MCF 10A (cell line): ENCODE measurements at regions of chr16 and their contacts with region 1.

Region 1: GRCh38 chr16:69396187-69397061 is 10.6 kb upstream of the TERF2 start:
- DNase-seq: peak; percentile 97
- H3K4me3 Mint-ChIP-seq: peak overlapping the region; percentile 35
- H3K27ac Mint-ChIP-seq: peak overlapping the region; percentile 78
- H3K4me1 Mint-ChIP-seq: peaks cover 17% of the 10 kb centered on the region
- H3K27me3 Mint-ChIP-seq: no peaks in the 10 kb centered on the region
- CTCF ChIP-seq: peak; percentile 59

Region 2: DNA sequence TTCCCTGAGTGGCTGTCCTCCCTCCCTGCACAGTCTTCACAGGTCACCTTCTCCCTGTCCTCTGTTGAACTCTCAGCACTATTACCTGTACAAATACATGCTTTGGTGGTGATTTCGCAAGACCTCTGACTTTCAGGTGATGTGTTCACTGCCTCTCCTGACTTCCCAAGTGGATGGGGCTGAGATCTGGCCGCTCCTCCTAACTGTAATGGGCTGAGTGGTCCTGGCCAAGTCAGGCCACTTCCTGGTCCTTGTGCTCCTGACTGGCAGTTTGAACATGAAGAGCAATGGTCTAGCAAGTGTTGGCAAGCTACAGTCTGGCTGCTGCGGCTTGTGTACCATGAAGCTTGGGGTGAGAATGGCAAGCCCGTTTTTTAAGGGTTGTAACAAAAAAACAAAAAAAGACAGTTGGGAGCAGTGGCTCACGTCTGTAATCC is 33.1 kb before region 1 on chr16:
- CTCF ChIA-PET with region 1: no interaction called
- POLR2A ChIA-PET with region 1: no interaction called
- intact Hi-C with region 1: no loop called
- DNase-seq: peak; percentile 19
- H3K4me3 Mint-ChIP-seq: no peak overlapping the region
- H3K27ac Mint-ChIP-seq: no peak overlapping the region
- H3K4me1 Mint-ChIP-seq: no peaks in the 10 kb centered on the region
- H3K27me3 Mint-ChIP-seq: no peaks in the 10 kb centered on the region
- CTCF ChIP-seq: no peak

Region 3: GRCh38 chr16:69410285-69410990 is 14.0 kb after region 1 on chr16:
- CTCF ChIA-PET with region 1: interaction called, 8 read pairs
- POLR2A ChIA-PET with region 1: interaction called, 16 read pairs
- intact Hi-C with region 1: no loop called
- DNase-seq: peak; percentile 85
- H3K4me3 Mint-ChIP-seq: peak overlapping the region; percentile 24
- H3K27ac Mint-ChIP-seq: peak overlapping the region; percentile 58
- H3K4me1 Mint-ChIP-seq: peaks cover 28% of the 10 kb centered on the region
- H3K27me3 Mint-ChIP-seq: no peaks in the 10 kb centered on the region
- CTCF ChIP-seq: no peak

Region 4: DNA sequence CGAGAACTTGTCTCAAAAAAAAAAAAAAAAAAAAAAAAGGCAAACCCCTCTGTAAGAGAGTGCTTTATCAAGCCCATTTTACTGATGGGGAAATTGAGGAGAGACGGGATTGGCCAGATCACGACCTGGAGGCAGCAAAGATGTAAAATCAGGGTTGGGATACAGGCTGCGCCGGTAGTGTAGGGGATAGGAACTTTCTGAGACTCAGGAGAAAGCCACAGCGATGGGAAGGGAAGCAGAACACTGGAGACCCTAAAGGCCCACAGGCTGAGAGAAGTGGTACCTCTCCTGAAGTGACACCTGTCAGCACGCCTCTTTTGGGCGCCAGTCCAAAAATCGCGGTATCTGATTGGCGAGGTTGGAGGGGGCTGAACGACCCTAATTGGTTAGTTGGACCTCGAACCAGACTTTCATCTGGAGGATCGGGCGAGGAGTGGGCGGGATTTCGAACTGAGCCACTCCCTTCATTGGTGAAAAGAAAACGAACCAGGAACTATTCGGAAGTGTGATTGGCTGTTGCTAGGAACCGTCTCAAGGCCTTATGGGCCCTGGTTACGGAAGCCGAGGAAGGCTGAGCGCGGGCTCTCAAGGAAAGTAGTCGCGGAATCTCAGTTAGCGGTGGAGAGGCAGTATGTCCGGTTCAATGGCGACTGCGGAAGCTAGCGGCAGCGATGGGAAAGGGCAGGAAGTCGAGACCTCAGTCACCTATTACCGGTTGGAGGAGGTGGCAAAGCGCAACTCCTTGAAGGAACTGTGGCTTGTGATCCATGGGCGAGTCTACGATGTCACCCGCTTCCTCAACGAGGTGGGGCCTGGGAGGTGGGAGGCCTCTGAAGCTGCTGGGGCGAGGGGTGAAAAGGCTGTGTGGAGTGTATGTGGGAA is 27.9 kb after region 1 on chr16 and contains the start of gene CYB5B:
- CTCF ChIA-PET with region 1: interaction called, 13 read pairs
- POLR2A ChIA-PET with region 1: interaction called, 17 read pairs
- intact Hi-C with region 1: loop called (anchors 1 kb)
- DNase-seq: peak; percentile 99
- H3K4me3 Mint-ChIP-seq: peak within 1 kb of the TSS; percentile 87
- H3K27ac Mint-ChIP-seq: peak within 1 kb of the TSS; percentile 91
- H3K4me1 Mint-ChIP-seq: no peaks in the 10 kb centered on the region
- H3K27me3 Mint-ChIP-seq: no peaks in the 10 kb centered on the region
- CTCF ChIP-seq: no peak
- total RNA-seq, gene CYB5B: 112 and 118 TPM in 2 replicates

Region 5: GRCh38 chr16:69443927-69444631 is 47.7 kb after region 1 on chr16:
- CTCF ChIA-PET with region 1: interaction called, 5 read pairs
- POLR2A ChIA-PET with region 1: interaction called, 5 read pairs
- intact Hi-C with region 1: loop called (anchors 5 kb)
- DNase-seq: no peak
- H3K4me3 Mint-ChIP-seq: peak overlapping the region; percentile 50
- H3K27ac Mint-ChIP-seq: peak overlapping the region; percentile 80
- H3K4me1 Mint-ChIP-seq: peaks cover 16% of the 10 kb centered on the region
- H3K27me3 Mint-ChIP-seq: no peaks in the 10 kb centered on the region
- CTCF ChIP-seq: no peak

Region 6: GRCh38 chr16:69644790-69645189 is 248.4 kb after region 1 on chr16:
- CTCF ChIA-PET with region 1: no interaction called
- POLR2A ChIA-PET with region 1: no interaction called
- intact Hi-C with region 1: loop called (anchors 1 kb)
- DNase-seq: no peak
- H3K4me3 Mint-ChIP-seq: no peak overlapping the region
- H3K27ac Mint-ChIP-seq: no peak overlapping the region
- H3K4me1 Mint-ChIP-seq: peaks cover 6% of the 10 kb centered on the region
- H3K27me3 Mint-ChIP-seq: no peaks in the 10 kb centered on the region
- CTCF ChIP-seq: no peak

Region 7: GRCh38 chr16:69709456-69710084 is 313.1 kb after region 1 on chr16:
- CTCF ChIA-PET with region 1: interaction called, 3 read pairs
- POLR2A ChIA-PET with region 1: no interaction called
- intact Hi-C with region 1: loop called (anchors 1 kb)
- DNase-seq: peak; percentile 81
- H3K4me3 Mint-ChIP-seq: no peak overlapping the region
- H3K27ac Mint-ChIP-seq: no peak overlapping the region
- H3K4me1 Mint-ChIP-seq: peaks cover 16% of the 10 kb centered on the region
- H3K27me3 Mint-ChIP-seq: no peaks in the 10 kb centered on the region
- CTCF ChIP-seq: peak; percentile 65

Region 8: GRCh38 chr16:69754469-69755310 is 358.3 kb after region 1 on chr16 and contains the start of gene NOB1:
- CTCF ChIA-PET with region 1: interaction called, 12 read pairs
- POLR2A ChIA-PET with region 1: interaction called, 10 read pairs
- intact Hi-C with region 1: loop called (anchors 1 kb)
- DNase-seq: peak; percentile 94
- H3K4me3 Mint-ChIP-seq: peak within 1 kb of the TSS; percentile 98
- H3K27ac Mint-ChIP-seq: peak within 1 kb of the TSS; percentile 99
- H3K4me1 Mint-ChIP-seq: peaks cover 3% of the 10 kb centered on the region
- H3K27me3 Mint-ChIP-seq: no peaks in the 10 kb centered on the region
- CTCF ChIP-seq: peak; percentile 93
- total RNA-seq, gene NOB1: 73.3 and 110 TPM in 2 replicates

Region 9: DNA sequence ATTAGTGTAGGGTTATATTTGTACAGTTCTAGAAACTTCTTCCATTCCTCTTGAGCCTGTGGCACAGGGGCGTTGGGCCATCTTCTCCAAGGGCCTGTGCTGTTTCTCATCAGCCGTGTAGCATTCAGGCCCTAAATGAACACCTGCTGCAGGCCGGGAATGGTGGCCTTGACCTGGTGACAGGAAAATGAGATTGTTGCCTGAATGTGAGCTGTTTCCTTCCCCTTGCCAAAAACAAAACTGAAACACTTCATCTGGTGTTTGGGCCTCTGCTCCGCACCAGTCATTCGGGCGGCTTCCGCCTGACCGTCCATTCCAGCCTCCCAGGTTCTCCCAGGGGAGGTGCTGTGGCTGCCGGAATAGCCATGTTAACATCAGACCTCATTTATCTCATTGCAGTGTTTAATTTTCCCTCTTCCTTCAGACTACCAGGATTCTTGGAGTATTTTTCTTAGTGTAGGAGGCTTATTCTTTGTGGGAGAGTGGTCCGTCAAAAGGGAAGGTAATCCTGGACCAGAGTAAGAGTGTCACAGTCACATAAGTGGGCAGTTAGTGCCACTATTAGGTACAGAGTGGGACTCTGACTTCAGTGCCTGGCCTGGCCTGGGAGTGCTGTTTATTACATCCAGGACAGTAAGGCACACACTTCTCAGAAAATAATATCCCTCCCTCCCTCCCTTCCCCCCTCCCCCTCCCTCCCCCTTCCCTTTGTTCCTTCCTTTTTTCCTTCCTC is 427.6 kb after region 1 on chr16:
- CTCF ChIA-PET with region 1: no interaction called
- POLR2A ChIA-PET with region 1: no interaction called
- intact Hi-C with region 1: no loop called
- DNase-seq: no peak
- H3K4me3 Mint-ChIP-seq: no peak overlapping the region
- H3K27ac Mint-ChIP-seq: no peak overlapping the region
- H3K4me1 Mint-ChIP-seq: no peaks in the 10 kb centered on the region
- H3K27me3 Mint-ChIP-seq: no peaks in the 10 kb centered on the region
- CTCF ChIP-seq: no peak